Activated B cell treated with CpG ODN at 0.5 μM for 24 hours (primary cell): ENCODE measurements at regions of chr2 and their contacts with region 1.

Region 1: GRCh38 chr2:240560480-240561326 is 546 bp downstream of the DUSP28 start:
- DNase-seq: peak; percentile 99
- ATAC-seq: peak; percentile 70
- H3K4me3 Mint-ChIP-seq: peak overlapping the region; percentile 81
- H3K27ac Mint-ChIP-seq: peak overlapping the region; percentile 89
- H3K4me1 Mint-ChIP-seq: peaks cover 77% of the 10 kb centered on the region
- H3K27me3 Mint-ChIP-seq: no peaks in the 10 kb centered on the region
- CTCF ChIP-seq: no peak

Region 2: GRCh38 chr2:240434728-240435456 is 125.8 kb before region 1 on chr2:
- CTCF ChIA-PET with region 1: no interaction called
- POLR2A ChIA-PET with region 1: no interaction called
- intact Hi-C with region 1: loop called (anchors 2 kb)
- DNase-seq: peak; percentile 94
- ATAC-seq: peak; percentile 90
- H3K4me3 Mint-ChIP-seq: peak overlapping the region; percentile 85
- H3K27ac Mint-ChIP-seq: peak overlapping the region; percentile 46
- H3K4me1 Mint-ChIP-seq: peaks cover 11% of the 10 kb centered on the region
- H3K27me3 Mint-ChIP-seq: peaks cover 11% of the 10 kb centered on the region
- CTCF ChIP-seq: no peak

Region 3: DNA sequence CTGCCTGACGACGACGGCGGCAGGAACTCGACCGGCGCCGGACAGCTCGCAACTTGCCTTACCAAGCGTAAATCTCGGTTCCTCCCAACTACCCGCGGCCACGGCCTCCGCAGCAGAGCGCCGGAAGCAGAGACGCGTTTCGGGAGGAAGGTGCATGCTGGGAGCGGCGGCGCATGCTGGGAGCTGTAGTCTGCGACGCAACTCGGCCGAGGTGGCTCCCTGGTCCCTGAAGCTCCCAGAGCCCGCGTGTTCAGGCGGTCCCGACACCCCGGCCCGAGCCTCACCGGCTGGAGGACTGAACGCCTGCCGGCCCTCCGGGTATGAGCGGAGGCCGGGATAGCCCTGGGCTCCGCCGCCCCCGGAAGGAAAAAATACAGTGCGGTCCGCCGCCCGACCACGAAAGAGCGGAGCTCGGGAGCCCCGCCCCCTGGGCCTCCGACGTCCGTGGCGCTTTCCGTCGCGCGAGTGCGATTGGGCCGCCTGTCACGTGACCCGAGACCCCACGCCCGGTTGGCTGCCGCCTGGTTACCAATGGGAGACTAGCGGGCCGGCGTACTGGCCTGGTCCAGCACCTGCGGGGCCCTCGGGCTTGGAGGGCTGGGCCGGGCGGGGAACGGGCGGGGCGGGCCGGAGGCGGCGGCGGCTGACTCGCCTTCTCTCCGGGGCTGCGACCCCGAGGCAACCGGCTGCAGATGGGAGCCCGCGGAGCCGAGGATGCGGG is 25.7 kb after region 1 on chr2 and contains the start of gene CAPN10:
- CTCF ChIA-PET with region 1: interaction called, 52 read pairs
- POLR2A ChIA-PET with region 1: interaction called, 536 read pairs
- intact Hi-C with region 1: loop called (anchors 1 kb)
- DNase-seq: peak; percentile 96
- ATAC-seq: peak; percentile 71
- H3K4me3 Mint-ChIP-seq: peak within 1 kb of the TSS; percentile 95
- H3K27ac Mint-ChIP-seq: peak within 1 kb of the TSS; percentile 96
- H3K4me1 Mint-ChIP-seq: peaks cover 58% of the 10 kb centered on the region
- H3K27me3 Mint-ChIP-seq: no peaks in the 10 kb centered on the region
- CTCF ChIP-seq: no peak
- total RNA-seq, gene CAPN10: 55.2 and 61.8 TPM in 2 replicates

Region 4: DNA sequence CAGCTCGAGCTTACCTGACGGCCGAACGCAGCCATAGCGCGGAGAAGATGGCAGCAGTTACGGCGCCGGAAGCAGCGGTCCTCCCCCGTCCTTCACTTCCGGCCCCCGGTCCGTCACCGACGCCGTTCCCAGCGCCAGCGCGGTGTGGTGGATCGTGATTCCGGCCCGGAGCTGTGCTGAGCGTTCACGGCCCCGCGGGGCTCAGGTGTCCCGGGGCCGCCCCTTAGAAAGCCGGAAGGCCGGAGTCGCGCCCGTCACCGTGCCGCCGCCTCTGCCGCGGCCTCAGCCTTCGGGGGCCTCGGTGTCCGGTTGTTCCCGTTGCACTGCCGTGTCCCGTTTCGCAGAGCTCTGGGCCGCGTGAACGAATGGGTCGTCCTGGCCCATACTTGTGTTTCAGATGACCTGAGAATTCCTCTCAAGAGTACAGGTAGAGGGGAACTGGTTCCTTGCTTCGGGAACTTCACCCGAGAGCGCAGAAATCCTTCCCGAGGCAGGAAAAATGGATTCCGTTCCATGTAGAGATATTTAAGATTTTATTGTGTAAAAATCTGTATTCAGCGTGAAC is 541.6 kb after region 1 on chr2 and contains the start of gene MTERF4:
- CTCF ChIA-PET with region 1: no interaction called
- POLR2A ChIA-PET with region 1: interaction called, 5 read pairs
- intact Hi-C with region 1: loop called (anchors 10 kb)
- DNase-seq: peak; percentile 85
- ATAC-seq: peak; percentile 92
- H3K4me3 Mint-ChIP-seq: peak within 1 kb of the TSS; percentile 97
- H3K27ac Mint-ChIP-seq: peak within 1 kb of the TSS; percentile 98
- H3K4me1 Mint-ChIP-seq: peaks cover 55% of the 10 kb centered on the region
- H3K27me3 Mint-ChIP-seq: no peaks in the 10 kb centered on the region
- CTCF ChIP-seq: no peak
- total RNA-seq, gene MTERF4: 99.7 and 122 TPM in 2 replicates

Region 5: DNA sequence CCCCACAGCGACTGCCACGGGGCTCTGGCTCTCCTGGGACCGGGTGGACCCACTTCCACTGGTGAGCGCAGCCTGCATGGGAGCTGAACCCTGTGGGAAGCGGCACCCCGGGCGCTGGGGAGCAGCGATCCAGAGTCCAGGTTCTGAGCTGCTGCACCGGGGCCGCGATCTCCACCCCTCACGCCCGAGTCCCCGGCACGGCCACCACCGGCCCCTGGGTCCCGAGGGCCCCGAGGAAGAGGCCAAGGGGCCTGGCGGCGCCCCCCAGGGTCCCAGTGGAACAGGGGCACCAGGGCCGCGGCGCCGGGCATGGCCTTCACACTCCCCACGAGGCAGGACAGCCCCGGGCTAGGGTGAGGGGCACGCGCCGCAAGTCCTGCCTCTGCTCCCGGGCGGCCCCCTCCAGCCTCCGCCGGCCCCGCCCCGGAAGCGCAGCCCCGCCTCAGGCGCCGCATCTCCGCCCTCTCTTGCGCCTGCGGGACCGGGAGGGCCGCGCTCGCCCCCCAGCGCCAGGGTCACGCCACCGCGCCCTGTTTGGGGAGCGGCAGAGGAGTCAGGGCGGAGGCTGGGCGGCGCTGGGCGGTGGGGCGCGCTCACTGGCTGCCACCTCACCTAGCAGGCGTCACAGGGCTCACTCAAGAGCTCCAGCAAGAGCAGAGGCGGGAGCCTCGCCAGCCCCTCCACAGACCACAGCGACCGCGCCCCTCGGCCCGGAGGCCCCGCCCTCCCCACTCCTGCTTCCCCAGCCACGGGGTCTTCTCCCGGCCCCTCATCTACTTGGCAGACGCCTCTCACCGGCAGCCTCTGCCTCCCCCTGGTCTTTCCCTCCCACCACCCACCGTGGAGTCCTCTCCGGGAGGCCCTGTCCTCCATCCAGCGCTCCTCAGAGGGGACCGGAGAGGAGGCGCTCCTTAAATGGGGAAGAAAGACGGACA is 1049.4 kb after region 1 on chr2:
- CTCF ChIA-PET with region 1: no interaction called
- POLR2A ChIA-PET with region 1: no interaction called
- intact Hi-C with region 1: loop called (anchors 10 kb)
- DNase-seq: peak; percentile 92
- ATAC-seq: peak; percentile 99
- H3K4me3 Mint-ChIP-seq: peak overlapping the region; percentile 66
- H3K27ac Mint-ChIP-seq: peak overlapping the region; percentile 53
- H3K4me1 Mint-ChIP-seq: peaks cover 15% of the 10 kb centered on the region
- H3K27me3 Mint-ChIP-seq: no peaks in the 10 kb centered on the region
- CTCF ChIP-seq: no peak

Region 6: GRCh38 chr2:241734467-241735208 is 1173.9 kb after region 1 on chr2 and contains the start of gene D2HGDH:
- CTCF ChIA-PET with region 1: no interaction called
- POLR2A ChIA-PET with region 1: interaction called, 3 read pairs
- intact Hi-C with region 1: loop called (anchors 10 kb)
- DNase-seq: peak; percentile 97
- ATAC-seq: peak; percentile 94
- H3K4me3 Mint-ChIP-seq: peak within 1 kb of the TSS; percentile 82
- H3K27ac Mint-ChIP-seq: peak within 1 kb of the TSS; percentile 75
- H3K4me1 Mint-ChIP-seq: peaks cover 57% of the 10 kb centered on the region
- H3K27me3 Mint-ChIP-seq: no peaks in the 10 kb centered on the region
- CTCF ChIP-seq: no peak
- total RNA-seq, gene D2HGDH: 37.7 and 55.4 TPM in 2 replicates